ENCODE measurements at regions of chr4 and their contacts with region 1.

Region 1: DNA sequence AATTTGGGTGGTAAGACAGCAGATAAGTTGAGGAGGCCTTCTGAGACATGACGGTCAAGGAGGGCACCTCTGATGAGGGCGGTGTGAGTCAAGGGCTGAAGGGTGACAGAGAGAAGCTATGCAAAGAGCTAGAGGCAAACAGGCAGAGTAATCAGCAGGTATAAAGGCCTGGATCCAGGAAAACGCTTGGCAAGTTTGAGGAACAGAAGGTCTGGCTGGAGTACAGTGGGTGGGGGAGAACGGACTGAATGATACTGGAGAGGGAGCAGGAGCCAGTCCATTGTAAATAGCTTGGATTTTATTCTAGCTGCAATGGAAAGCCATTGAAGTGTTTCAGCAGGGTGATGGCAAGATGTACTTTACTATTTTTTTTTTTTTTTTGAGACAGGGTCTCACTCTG is 39.3 kb downstream of the RAB33B start:
- DNase-seq: no peak
- H3K4me3 ChIP-seq: no peak overlapping the region
- H3K27ac ChIP-seq: no peak overlapping the region
- H3K4me1 ChIP-seq: peaks cover 4% of the 10 kb centered on the region
- H3K27me3 ChIP-seq: no peaks in the 10 kb centered on the region
- CTCF ChIP-seq: no peak
- POLR2A ChIP-seq: no peak

Region 2: DNA sequence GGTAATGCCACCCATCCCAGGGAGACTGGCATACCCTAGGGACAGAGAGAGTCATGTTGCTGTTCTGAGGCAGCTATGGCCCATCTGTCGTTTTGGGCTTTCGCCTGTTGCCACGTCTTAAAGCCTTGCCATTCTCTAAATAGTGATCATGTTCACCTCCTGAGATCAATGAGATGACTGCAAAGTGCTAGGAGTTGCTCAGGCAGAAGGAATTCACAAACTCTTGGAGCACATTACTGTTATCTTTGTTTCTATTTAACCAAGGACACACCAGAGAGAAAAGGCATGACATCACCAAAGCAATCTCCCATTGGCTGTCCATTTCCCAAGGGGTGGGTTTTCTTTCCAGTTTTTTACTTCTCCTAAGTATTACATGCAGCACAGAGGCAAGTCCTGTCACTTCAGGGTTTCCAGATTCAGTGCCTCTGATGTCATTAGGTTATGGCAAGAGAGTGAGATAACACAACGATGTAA is 100.0 kb after region 1 on chr4:
- intact Hi-C with region 1: no loop called
- DNase-seq: peak; percentile 26
- H3K4me3 ChIP-seq: no peak overlapping the region
- H3K27ac ChIP-seq: no peak overlapping the region
- H3K4me1 ChIP-seq: no peaks in the 10 kb centered on the region
- H3K27me3 ChIP-seq: no peaks in the 10 kb centered on the region
- CTCF ChIP-seq: no peak
- POLR2A ChIP-seq: no peak

Region 3: DNA sequence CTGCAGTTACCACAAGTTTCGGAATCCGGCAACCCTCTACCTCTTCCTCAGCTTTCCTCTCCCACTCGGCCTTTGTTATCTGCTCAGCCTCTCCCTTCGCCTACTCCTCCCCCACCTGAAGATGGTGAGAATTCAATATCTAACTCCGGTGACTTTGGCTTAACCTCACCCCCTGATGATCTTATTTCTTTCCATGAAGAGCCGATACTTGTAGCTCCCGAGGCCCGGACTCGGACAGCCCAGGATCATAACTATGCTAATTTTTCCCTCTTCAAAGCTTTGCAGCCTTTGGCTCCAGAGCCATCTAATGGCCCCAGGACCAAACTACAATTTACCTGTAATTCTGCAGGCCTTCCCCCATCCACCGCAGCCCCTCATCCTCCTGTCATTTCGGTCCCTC is 140.5 kb after region 1 on chr4:
- intact Hi-C with region 1: loop called (anchors 10 kb)
- DNase-seq: peak; percentile 53
- H3K4me3 ChIP-seq: peak overlapping the region in 1 of 2 donors; percentile 18
- H3K27ac ChIP-seq: no peak overlapping the region
- H3K4me1 ChIP-seq: peaks cover 3% of the 10 kb centered on the region
- H3K27me3 ChIP-seq: no peaks in the 10 kb centered on the region
- CTCF ChIP-seq: peak in 2 of 3 experiments; percentile 27 to 41
- POLR2A ChIP-seq: no peak

Region 4: DNA sequence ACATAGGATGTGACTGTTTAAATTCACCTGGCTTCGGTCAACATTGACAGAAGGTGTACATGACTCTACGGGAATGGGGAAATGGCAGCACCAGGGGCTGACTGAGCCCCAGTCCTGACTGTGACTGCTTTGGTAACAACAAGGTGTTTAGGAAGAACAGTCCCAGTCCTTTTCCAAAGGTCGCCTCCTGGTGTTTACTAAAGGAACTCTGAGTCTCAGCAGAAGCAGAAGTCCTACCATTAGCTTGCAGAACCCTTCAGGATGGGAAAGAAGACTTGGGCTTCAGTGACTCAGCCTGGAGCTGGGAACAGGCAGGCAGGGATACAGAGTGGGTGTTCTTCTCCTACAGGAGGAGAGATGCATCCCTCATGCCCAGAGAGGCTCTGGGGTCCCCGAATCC is 275.7 kb after region 1 on chr4:
- intact Hi-C with region 1: no loop called
- DNase-seq: no peak
- H3K4me3 ChIP-seq: no peak overlapping the region
- H3K27ac ChIP-seq: no peak overlapping the region
- H3K4me1 ChIP-seq: peaks cover 16% of the 10 kb centered on the region
- H3K27me3 ChIP-seq: no peaks in the 10 kb centered on the region
- CTCF ChIP-seq: no peak
- POLR2A ChIP-seq: no peak